Vagina (tissue), 2 donors: ENCODE measurements at regions of chr5 and their contacts with region 1.

Region 1: DNA sequence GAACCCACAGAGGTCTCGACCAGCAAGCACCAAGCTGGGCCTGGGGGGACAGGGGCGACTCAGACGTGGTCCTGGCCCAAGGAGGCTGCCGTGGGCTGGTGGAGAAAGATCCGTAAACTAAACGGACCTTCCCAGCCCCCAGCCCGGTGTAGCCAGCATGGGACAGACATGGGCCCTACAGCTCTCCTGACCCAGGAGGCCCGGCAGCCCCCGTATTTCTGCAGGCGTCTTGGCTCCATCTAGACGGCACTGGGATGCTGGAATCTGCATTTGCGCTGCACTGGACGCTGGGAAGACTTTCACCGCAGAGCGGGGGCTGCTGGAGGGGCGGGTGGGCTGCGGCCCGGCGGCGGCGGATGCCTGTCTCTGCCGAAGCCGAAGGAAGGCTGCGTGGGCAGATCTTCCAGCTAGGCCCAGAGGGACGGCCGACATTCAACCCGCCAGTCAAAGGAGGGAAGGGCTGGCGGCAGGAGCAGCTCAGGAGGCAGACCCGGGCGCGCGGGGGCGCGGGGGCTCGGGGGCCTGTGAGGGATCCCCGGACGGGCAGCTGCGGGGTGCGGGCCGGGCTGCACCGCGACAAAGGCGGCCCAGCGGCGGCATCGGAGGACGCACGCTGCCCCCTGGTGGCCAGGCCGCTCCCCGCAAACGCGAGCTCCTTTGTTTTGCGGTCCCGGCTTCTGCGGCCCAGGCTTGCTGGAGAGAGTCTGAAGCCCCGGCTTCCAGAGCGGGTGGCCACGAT is 266.2 kb downstream of the NSG2 start:
- DNase-seq: peak in 1 of 2 donors; percentile 64
- H3K4me3 ChIP-seq: peak overlapping the region; percentile 27 to 40
- H3K27ac ChIP-seq: no peak overlapping the region
- H3K4me1 ChIP-seq: peaks cover 10% of the 10 kb centered on the region
- H3K27me3 ChIP-seq: no peaks in the 10 kb centered on the region
- CTCF ChIP-seq: peak; percentile 43 to 83 (median 58)
- POLR2A ChIP-seq: no peak

Region 2: DNA sequence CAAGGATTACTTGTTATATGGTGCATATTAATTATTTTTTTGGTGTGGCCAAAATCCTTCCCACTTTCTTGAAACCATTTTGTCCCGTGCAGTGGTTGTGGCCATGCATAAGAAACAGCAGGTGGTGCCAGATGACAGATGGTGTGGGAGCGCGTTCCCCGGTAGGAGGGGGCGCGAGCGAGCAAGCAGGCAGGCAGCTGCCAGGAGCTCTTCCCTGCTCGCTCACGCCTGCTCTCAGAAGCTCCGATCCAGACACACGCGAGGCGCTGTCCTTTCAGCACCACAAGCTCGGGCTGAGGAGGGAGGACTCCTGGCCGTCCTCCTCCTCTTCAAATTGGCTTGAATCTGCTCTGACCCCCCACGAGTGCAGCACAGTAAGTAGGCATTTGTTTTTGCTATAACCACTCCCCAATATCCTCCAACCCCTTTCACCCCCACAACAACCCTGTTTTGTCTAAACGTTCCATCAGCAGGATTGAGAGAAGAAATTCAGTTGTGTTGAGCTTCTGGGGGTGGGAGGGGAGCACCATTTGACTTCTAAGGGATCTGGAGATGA is 266.2 kb before region 1 on chr5 and contains the start of gene NSG2:
- intact Hi-C with region 1: loop called (anchors 10 kb)
- DNase-seq: no peak
- H3K4me3 ChIP-seq: no peak within 1 kb of the TSS
- H3K27ac ChIP-seq: no peak within 1 kb of the TSS
- H3K4me1 ChIP-seq: no peaks in the 10 kb centered on the region
- H3K27me3 ChIP-seq: no peaks in the 10 kb centered on the region
- CTCF ChIP-seq: no peak
- POLR2A ChIP-seq: no peak
- total RNA-seq, gene NSG2: 7.1 TPM

Region 3: DNA sequence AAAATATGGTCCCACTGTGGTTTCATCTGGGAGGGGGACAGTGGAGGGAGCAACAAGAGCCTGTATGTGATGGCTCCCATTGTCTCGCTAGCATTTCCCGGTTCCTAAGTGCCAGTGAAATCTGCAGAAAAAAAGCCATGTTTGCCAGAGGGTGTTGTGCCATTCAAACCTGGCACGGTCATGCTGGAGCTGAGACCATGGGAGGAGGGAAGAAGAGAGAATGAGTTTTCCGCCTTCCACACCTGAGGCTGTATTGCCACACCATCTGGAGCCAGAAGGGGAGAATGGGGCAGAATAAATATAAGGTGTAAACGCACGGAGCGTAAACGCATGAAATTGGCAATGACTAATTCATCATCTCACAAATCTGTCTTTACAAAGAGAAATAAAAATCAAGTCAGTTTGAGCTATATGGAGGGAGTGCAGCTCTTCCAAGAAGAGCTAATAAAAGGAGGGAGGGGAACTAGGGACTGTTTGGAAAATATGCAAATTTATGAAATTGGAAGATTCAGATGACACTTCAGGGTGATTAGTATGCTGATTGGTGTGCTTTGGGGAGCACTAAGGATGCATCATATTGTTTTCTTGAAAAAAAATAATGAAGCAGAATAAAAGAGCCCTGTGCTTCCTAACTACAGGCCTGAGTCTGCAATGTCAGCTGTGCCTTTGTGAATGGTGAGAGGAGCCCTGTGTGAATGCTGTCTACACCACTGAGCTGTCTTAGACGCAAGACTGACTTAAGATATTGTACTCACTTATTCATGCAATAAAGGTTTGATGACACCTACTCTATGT is 28.3 kb before region 1 on chr5:
- intact Hi-C with region 1: no loop called
- DNase-seq: peak in 1 of 2 donors; percentile 16
- H3K4me3 ChIP-seq: no peak overlapping the region
- H3K27ac ChIP-seq: no peak overlapping the region
- H3K4me1 ChIP-seq: no peaks in the 10 kb centered on the region
- H3K27me3 ChIP-seq: no peaks in the 10 kb centered on the region
- CTCF ChIP-seq: no peak
- POLR2A ChIP-seq: no peak